HEK293 (cell line): ENCODE measurements at regions of chr18 and their contacts with region 1.

Region 1: GRCh38 chr18:42298759-42299675 is 344.0 kb downstream of the PIK3C3 start:
- H3K4me3 ChIP-seq: no peak overlapping the region
- H3K27ac ChIP-seq: no peak overlapping the region
- H3K4me1 ChIP-seq: no peaks in the 10 kb centered on the region
- CTCF ChIP-seq: peak; percentile 41

Region 2: DNA sequence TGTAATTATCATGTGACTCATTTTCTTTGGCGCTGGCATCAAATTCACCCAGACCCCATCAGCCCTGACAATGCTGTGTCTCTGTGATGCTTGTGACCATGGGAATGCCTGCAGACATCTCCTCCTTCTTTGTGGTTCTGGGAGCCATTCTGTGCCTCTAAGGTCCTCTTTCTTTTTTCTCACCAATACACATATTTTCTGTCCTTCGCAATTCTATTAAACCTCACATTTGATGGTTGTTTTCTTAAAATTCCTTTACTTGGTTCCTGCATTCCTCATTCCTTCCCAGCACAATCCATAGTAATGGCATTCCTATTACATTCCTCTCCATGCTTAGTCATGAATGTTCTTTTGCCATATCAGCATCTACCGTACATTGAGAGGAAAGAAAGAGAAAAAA is 31.3 kb after region 1 on chr18:
- CTCF ChIA-PET with region 1: interaction called, 11 read pairs
- POLR2A ChIA-PET with region 1: no interaction called
- H3K4me3 ChIP-seq: no peak overlapping the region
- H3K27ac ChIP-seq: no peak overlapping the region
- H3K4me1 ChIP-seq: no peaks in the 10 kb centered on the region
- CTCF ChIP-seq: no peak

Region 3: GRCh38 chr18:43271593-43272432 is 972.8 kb after region 1 on chr18:
- CTCF ChIA-PET with region 1: interaction called, 17 read pairs
- POLR2A ChIA-PET with region 1: no interaction called
- H3K4me3 ChIP-seq: no peak overlapping the region
- H3K27ac ChIP-seq: no peak overlapping the region
- H3K4me1 ChIP-seq: no peaks in the 10 kb centered on the region
- CTCF ChIP-seq: 0 out of 2 replicates have a peak, but pooled peaks have one; percentile 12